T-cell (primary cell): ENCODE measurements at regions of chr17 and their contacts with region 1.

Region 1: GRCh38 chr17:45353043-45353442 is 36.2 kb upstream of the MAP3K14 start:
- DNase-seq: peak in 1 of 35 experiments; percentile 23
- ATAC-seq: no peak
- H3K4me3 ChIP-seq: no peak overlapping the region
- H3K4me3 Mint-ChIP-seq: no peak overlapping the region
- H3K27ac ChIP-seq: no peak overlapping the region
- H3K27ac Mint-ChIP-seq: no peak overlapping the region
- H3K4me1 ChIP-seq: no peaks in the 10 kb centered on the region
- H3K4me1 Mint-ChIP-seq: peaks cover 0 to 3% (median 2%) of the 10 kb centered on the region in 3 donors
- H3K27me3 ChIP-seq: no peaks in the 10 kb centered on the region
- H3K27me3 Mint-ChIP-seq: no peaks in the 10 kb centered on the region

Region 2: GRCh38 chr17:44901323-44901965 is 451.6 kb before region 1 on chr17:
- CTCF ChIA-PET with region 1: no interaction called
- POLR2A ChIA-PET with region 1: interaction called in 1 of 2 experiments, 10 read pairs
- DNase-seq: no peak
- ATAC-seq: no peak
- H3K4me3 ChIP-seq: no peak overlapping the region
- H3K4me3 Mint-ChIP-seq: no peak overlapping the region
- H3K27ac ChIP-seq: no peak overlapping the region
- H3K27ac Mint-ChIP-seq: no peak overlapping the region
- H3K4me1 ChIP-seq: peaks cover 7 to 24% of the 10 kb centered on the region in 2 experiments
- H3K4me1 Mint-ChIP-seq: peaks cover 23 to 27% (median 25%) of the 10 kb centered on the region in 3 donors
- H3K27me3 ChIP-seq: peaks cover 0 to 34% of the 10 kb centered on the region in 2 experiments
- H3K27me3 Mint-ChIP-seq: peaks cover 0 to 6% of the 10 kb centered on the region in 2 donors